IMR-90 (cell line): ENCODE measurements at regions of chr2 and their contacts with region 1.

Region 1: GRCh38 chr2:173965329-173966025 is at the start of gene SP3:
- DNase-seq: peak; percentile 97
- ATAC-seq: peak; percentile 66
- H3K4me3 ChIP-seq: peak within 1 kb of the TSS; percentile 93
- H3K27ac ChIP-seq: peak within 1 kb of the TSS; percentile 99
- H3K4me1 ChIP-seq: peaks cover 7% of the 10 kb centered on the region
- H3K27me3 ChIP-seq: no peaks in the 10 kb centered on the region
- CTCF ChIP-seq: no peak
- POLR2A ChIP-seq: no peak
- RAD21 ChIP-seq: no peak; the same call in 1 of the 2 replicates
- total RNA-seq, gene SP3: 136 and 137 TPM in 2 replicates

Region 2: GRCh38 chr2:173307293-173307692 is 658.2 kb before region 1 on chr2:
- CTCF ChIA-PET with region 1: no interaction called
- POLR2A ChIA-PET with region 1: no interaction called
- dilution Hi-C with region 1: no loop called
- in situ Hi-C with region 1: no loop called
- intact Hi-C with region 1: no loop called
- DNase-seq: no peak
- ATAC-seq: no peak
- H3K4me3 ChIP-seq: no peak overlapping the region
- H3K27ac ChIP-seq: no peak overlapping the region
- H3K4me1 ChIP-seq: no peaks in the 10 kb centered on the region
- H3K27me3 ChIP-seq: peaks cover 13% of the 10 kb centered on the region
- CTCF ChIP-seq: no peak
- POLR2A ChIP-seq: no peak
- RAD21 ChIP-seq: no peak

Region 3: GRCh38 chr2:173942861-173943538 is 22.5 kb before region 1 on chr2:
- CTCF ChIA-PET with region 1: no interaction called
- POLR2A ChIA-PET with region 1: no interaction called
- dilution Hi-C with region 1: no loop called
- in situ Hi-C with region 1: no loop called
- intact Hi-C with region 1: no loop called
- DNase-seq: no peak
- ATAC-seq: no peak
- H3K4me3 ChIP-seq: no peak overlapping the region
- H3K27ac ChIP-seq: no peak overlapping the region
- H3K4me1 ChIP-seq: peaks cover 4% of the 10 kb centered on the region
- H3K27me3 ChIP-seq: no peaks in the 10 kb centered on the region
- CTCF ChIP-seq: no peak
- POLR2A ChIP-seq: no peak
- RAD21 ChIP-seq: no peak

Region 4: DNA sequence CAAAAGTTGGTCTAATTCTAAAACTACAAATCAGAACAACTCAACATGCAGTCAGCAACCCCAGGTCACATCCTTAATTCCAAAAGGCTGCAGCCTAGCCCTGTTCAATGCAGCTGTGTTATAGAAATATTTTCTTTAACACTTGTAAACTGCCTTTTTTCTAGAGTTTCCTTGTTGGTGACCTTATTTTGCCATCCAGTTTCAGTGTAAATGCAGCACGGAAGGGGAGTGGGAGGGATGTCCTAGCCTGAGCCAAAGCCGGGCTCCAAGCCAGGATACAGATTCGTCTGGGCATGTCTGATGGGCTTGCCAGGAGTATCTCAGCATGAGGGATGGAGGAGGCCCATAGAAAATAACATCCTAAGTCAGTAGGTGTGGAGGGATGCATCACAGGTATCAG is 17.4 kb after region 1 on chr2:
- CTCF ChIA-PET with region 1: no interaction called
- POLR2A ChIA-PET with region 1: interaction called, 10 read pairs
- dilution Hi-C with region 1: no loop called
- in situ Hi-C with region 1: no loop called
- intact Hi-C with region 1: no loop called
- DNase-seq: peak; percentile 56
- ATAC-seq: peak; percentile 62
- H3K4me3 ChIP-seq: no peak overlapping the region
- H3K27ac ChIP-seq: peak overlapping the region; percentile 53; the same call in 1 of the 2 replicates
- H3K4me1 ChIP-seq: peaks cover 17% of the 10 kb centered on the region
- H3K27me3 ChIP-seq: no peaks in the 10 kb centered on the region
- CTCF ChIP-seq: no peak
- POLR2A ChIP-seq: no peak
- RAD21 ChIP-seq: no peak

Region 5: DNA sequence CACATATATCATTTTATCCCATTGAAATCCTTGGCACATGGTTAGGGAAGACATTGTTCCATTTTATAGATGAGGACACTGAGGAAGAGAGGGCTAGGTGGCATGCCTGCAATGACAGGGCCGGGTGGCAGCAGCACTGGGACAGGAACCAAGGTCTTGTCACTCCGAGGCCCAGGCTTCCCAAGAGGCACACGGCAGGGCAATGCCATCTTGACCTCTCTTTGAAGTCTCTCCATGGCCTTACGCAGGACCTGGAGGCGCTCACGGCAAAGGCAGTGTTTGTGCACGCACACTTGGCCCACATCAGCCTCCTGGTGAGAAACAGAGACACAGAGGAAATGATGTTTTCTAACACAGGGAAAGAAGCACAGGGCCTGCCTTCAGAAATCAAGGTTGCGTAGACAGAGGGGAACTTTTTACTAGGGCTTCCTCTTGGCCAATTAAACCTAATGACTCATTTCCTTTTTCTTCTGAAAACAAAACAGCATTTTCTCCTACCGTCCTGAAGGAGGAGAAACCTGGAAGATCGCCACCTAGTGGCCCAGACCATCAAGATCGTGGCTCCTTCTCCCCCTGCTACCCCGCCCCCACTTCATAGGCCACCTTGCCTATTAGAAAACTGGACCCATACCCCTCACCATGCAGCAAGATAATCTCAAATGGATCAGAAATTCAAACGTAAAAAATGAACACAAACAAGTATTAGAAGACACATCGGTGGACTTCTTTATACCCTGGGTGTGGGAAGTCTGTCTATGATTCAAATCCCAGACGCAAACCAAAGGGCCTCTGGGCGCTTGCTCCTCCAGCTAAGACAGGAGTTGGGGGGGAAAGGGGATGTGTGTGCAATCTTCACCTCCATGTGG is 74.3 kb after region 1 on chr2:
- CTCF ChIA-PET with region 1: no interaction called
- POLR2A ChIA-PET with region 1: no interaction called
- dilution Hi-C with region 1: no loop called
- in situ Hi-C with region 1: no loop called
- intact Hi-C with region 1: loop called (anchors 1 kb)
- DNase-seq: peak; percentile 97
- ATAC-seq: peak; percentile 94
- H3K4me3 ChIP-seq: no peak overlapping the region
- H3K27ac ChIP-seq: peak overlapping the region; percentile 82
- H3K4me1 ChIP-seq: peaks cover 6% of the 10 kb centered on the region
- H3K27me3 ChIP-seq: no peaks in the 10 kb centered on the region
- CTCF ChIP-seq: peak; percentile 93
- POLR2A ChIP-seq: no peak
- RAD21 ChIP-seq: peak; percentile 91

Region 6: GRCh38 chr2:174051741-174052583 is 86.5 kb after region 1 on chr2:
- CTCF ChIA-PET with region 1: no interaction called
- POLR2A ChIA-PET with region 1: interaction called, 16 read pairs
- dilution Hi-C with region 1: no loop called
- in situ Hi-C with region 1: no loop called
- intact Hi-C with region 1: no loop called
- DNase-seq: peak; percentile 83
- ATAC-seq: peak; percentile 95
- H3K4me3 ChIP-seq: no peak overlapping the region
- H3K27ac ChIP-seq: peak overlapping the region; percentile 58
- H3K4me1 ChIP-seq: peaks cover 18% of the 10 kb centered on the region
- H3K27me3 ChIP-seq: no peaks in the 10 kb centered on the region
- CTCF ChIP-seq: 0 out of 2 replicates have a peak, but pooled peaks have one; percentile 22
- POLR2A ChIP-seq: no peak
- RAD21 ChIP-seq: peak; percentile 25; the same call in 1 of the 2 replicates

Region 7: GRCh38 chr2:174248187-174248997 is 282.9 kb after region 1 on chr2 and contains the start of gene OLA1:
- CTCF ChIA-PET with region 1: no interaction called
- POLR2A ChIA-PET with region 1: no interaction called
- dilution Hi-C with region 1: no loop called
- in situ Hi-C with region 1: no loop called
- intact Hi-C with region 1: loop called (anchors 10 kb)
- DNase-seq: peak; percentile 90
- ATAC-seq: peak; percentile 100
- H3K4me3 ChIP-seq: peak within 1 kb of the TSS; percentile 89
- H3K27ac ChIP-seq: peak within 1 kb of the TSS; percentile 78
- H3K4me1 ChIP-seq: no peaks in the 10 kb centered on the region
- H3K27me3 ChIP-seq: no peaks in the 10 kb centered on the region
- CTCF ChIP-seq: no peak
- POLR2A ChIP-seq: peak; percentile 39; the same call in 1 of the 2 replicates
- RAD21 ChIP-seq: no peak
- total RNA-seq, gene OLA1: 54.7 and 118 TPM in 2 replicates

Region 8: DNA sequence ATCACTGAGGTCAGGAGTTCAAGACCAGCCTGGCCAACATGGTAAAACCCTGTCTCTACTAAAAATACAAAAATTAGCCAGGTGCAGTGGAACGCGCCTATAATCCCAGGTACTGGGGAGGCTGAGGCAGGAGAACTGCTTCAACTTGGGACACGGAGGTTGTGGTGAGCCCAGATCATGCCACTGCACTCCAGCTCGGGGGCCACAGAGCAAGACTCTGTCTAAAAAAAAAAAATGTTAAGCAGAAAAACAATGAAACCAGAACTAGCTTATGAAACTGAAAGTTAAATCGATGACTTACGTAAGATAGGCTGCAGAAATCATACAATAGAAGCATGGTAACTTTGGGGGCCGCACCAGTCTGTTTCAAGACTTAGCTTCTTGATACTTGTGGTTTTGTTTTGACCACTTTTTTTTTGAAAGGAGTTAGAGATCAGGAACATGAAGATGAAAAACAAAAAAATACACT is 527.5 kb after region 1 on chr2:
- CTCF ChIA-PET with region 1: no interaction called
- POLR2A ChIA-PET with region 1: no interaction called
- dilution Hi-C with region 1: no loop called
- in situ Hi-C with region 1: no loop called
- intact Hi-C with region 1: no loop called
- DNase-seq: no peak
- ATAC-seq: no peak
- H3K4me3 ChIP-seq: no peak overlapping the region
- H3K27ac ChIP-seq: no peak overlapping the region
- H3K4me1 ChIP-seq: no peaks in the 10 kb centered on the region
- H3K27me3 ChIP-seq: peaks cover 3% of the 10 kb centered on the region; the same call in 1 of the 2 replicates
- CTCF ChIP-seq: no peak
- POLR2A ChIP-seq: no peak
- RAD21 ChIP-seq: no peak

Region 9: DNA sequence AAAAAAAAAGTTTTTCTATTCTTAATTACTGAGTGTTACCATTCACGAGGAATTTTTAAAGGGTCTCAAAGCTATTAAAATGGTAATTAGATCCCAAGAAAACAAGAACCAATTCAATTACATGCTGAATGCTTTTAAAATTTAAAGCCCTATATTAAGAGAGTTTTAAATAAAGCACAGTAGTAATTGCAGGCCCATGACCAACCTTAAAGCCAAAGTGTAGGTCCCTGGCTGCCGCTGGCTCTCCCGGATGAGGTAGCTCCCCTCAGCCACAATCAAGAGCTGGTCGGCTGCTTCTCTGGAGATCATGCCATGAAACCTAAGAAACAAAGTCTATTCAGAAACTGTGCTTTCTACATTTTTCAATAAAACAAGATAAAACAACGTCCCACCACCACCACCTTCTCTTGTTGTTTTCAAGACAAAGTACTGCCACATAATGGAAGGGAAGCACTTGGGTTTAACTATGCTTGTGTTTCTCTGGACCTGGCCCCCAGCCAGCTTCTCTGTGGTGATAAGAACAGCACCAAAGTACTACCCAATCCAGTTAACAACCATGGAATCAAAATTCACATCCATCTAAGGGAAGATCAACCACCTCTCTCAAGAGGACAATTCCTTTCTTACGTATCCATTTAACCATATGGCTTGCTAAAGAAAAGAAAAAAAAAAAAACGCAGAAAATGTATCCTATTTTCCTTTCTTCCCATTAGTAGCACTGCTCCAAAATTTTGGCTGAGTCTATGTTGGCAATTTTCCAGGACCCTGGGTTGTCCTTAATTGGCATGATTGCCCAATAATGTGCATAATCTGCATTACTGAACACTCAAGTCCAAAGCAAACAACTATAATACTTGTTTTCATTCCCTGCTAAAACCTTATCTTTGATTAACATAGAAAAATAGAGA is 949.6 kb after region 1 on chr2:
- CTCF ChIA-PET with region 1: no interaction called
- POLR2A ChIA-PET with region 1: no interaction called
- dilution Hi-C with region 1: no loop called
- in situ Hi-C with region 1: no loop called
- intact Hi-C with region 1: no loop called
- DNase-seq: no peak
- ATAC-seq: no peak
- H3K4me3 ChIP-seq: no peak overlapping the region
- H3K27ac ChIP-seq: no peak overlapping the region
- H3K4me1 ChIP-seq: no peaks in the 10 kb centered on the region; the same call in 1 of the 2 replicates
- H3K27me3 ChIP-seq: no peaks in the 10 kb centered on the region
- CTCF ChIP-seq: no peak
- POLR2A ChIP-seq: no peak
- RAD21 ChIP-seq: no peak